HEK293 (cell line): ENCODE measurements at regions of chr6 and their contacts with region 1.

Region 1: DNA sequence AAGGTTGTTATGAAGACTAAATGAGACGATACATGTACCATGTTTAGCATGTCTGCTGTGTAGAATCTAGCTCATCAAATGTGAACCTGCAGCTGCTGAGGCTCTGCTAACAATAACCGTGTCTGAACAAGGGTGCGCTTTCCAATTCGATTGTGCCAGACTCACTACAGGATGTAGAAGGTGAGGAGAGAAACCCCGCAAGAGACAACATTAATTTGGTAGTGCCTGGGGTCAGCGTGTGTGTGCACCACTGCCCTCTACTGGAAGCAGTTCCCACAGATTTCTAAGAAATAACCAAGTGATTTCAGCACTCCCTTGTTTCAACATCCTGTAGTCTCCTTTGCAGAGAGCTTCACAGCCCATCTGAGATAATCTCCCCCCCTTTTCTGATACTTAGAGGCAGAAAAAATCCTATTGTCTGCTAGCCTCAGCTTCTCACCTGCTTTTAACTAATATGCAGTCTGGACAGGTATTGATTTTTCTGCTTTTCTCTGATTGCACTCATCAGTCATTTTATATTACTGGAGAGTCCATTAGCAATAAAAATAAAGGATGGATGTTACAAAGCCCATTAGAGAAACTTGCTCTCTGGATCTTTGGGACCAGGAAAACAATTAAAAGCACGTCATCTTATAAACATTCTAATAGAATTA is 96.7 kb upstream of the BACH2 start:
- H3K4me3 ChIP-seq: no peak overlapping the region
- H3K27ac ChIP-seq: no peak overlapping the region
- H3K4me1 ChIP-seq: no peaks in the 10 kb centered on the region
- CTCF ChIP-seq: peak; percentile 63; the same call in 1 of the 2 replicates

Region 2: DNA sequence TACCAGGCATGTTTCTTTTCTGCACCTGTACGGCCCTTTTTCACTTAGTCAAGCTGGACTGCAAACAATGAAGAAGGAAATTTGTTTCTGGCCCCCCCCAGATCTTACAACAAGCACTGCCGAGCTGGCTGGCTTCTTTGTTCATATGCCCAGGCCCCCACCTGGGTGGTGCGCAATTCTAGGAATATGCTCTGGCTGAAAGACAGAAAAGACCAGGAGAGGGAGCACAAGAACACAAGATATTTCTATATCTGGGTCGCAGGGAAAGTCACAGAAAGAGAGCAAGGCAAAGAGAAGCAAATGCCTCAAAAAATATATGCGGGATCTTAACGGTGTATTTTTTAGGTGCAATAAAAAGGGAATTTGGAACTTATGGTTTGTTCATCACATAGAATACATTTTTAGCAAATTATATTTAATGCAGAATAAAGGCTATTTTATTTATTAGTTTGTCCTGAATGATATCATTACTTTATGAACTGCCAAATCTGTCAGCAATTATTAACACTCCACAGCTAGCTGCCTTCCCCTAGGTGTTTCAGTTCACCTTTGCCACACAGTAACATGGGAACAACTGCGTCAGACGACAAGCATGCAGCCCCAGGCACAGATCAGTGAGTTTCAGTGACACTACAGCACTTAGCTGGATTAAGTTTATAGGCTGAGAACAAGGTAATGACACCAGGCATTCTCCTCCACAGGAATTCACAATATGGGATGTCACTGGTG is 422.6 kb before region 1 on chr6:
- CTCF ChIA-PET with region 1: interaction called, 13 read pairs
- POLR2A ChIA-PET with region 1: no interaction called
- H3K4me3 ChIP-seq: no peak overlapping the region
- H3K27ac ChIP-seq: no peak overlapping the region
- H3K4me1 ChIP-seq: no peaks in the 10 kb centered on the region; the same call in 1 of the 2 replicates
- CTCF ChIP-seq: peak; percentile 47; the same call in 1 of the 2 replicates

Region 3: DNA sequence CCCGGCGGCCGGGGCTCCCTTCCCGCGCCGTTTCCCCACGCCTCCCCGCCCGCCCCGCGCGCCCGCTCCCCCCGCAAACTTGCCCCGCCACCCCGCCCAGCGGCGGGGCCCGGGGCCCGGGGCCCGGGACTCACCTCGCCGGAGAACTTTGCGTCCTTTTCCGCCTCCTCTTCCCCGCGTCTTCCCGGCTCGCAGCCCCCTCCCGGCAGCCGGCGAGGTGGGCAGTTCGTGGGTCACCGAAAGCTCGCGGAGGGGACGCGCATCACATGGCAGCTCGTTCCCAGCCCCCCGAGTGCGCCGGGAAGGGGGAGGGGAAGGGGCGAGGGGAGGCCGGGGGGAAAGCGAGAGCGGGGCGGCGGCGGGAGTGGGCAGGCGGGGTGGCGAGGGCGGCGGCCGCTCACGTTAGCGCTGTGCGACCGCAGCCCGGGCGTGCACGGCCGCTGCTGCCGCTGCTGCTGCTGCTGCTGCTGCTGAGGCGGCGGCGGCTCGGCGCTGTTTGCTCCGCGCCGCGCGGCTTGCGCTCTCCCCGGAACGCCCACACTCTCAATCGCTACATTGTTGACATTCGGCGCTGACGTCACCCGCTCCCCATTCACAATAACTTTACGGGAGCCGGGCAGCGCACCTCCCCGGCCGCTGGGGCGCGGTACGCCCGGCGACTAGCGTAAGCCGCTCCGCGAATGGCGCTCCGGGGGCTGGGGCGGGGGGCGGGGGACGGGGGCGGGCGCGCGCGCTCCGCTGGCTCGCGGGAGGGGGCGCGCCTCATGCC is 96.8 kb before region 1 on chr6 and contains the start of gene BACH2:
- CTCF ChIA-PET with region 1: interaction called, 18 read pairs
- POLR2A ChIA-PET with region 1: interaction called, 4 read pairs
- H3K4me3 ChIP-seq: peak within 1 kb of the TSS; percentile 82
- H3K27ac ChIP-seq: peak within 1 kb of the TSS; percentile 70; the same call in 1 of the 2 replicates
- H3K4me1 ChIP-seq: no peaks in the 10 kb centered on the region; the same call in 1 of the 2 replicates
- CTCF ChIP-seq: no peak

Region 4: GRCh38 chr6:90343581-90343980 is 49.8 kb before region 1 on chr6:
- CTCF ChIA-PET with region 1: interaction called, 14 read pairs
- POLR2A ChIA-PET with region 1: no interaction called
- H3K4me3 ChIP-seq: no peak overlapping the region
- H3K27ac ChIP-seq: no peak overlapping the region
- H3K4me1 ChIP-seq: no peaks in the 10 kb centered on the region
- CTCF ChIP-seq: no peak

Region 5: DNA sequence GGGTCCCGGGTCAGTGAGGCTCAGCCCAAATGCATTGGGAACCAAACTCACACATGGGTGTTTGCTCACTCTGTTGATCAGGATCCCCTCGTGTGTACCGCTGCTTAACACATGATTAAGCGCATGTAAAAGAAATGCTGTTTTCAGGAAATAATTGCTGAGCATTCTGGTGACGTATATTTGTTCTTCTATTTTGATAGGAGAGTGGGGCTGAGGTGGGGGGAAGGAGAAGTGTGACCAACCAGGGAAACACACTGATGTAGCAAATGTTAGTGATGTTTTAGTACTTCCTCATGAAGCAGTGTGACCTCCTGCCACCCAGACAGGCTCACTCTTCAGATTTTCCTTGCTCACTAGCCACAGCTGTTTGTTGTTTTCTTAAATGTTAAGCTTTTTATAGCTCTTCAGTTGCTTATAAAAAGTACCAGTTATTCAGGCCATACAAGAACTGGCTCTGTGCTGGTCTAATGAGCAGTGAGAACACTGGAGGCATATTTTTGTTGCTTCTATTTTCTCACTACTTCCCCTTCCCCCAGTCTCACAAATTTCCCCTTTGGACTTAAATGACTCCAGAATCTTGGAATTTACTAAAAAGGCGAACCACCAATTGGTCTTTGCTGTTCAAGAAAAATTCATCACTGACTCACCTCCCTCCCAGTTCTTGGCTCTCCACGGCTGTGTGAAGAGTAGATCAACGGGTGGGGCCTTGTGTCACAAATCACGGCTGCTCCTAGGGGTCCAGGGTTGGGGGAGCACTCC is 17.5 kb before region 1 on chr6:
- CTCF ChIA-PET with region 1: interaction called, 46 read pairs
- POLR2A ChIA-PET with region 1: no interaction called
- H3K4me3 ChIP-seq: no peak overlapping the region
- H3K27ac ChIP-seq: no peak overlapping the region
- H3K4me1 ChIP-seq: no peaks in the 10 kb centered on the region
- CTCF ChIP-seq: no peak

Region 6: DNA sequence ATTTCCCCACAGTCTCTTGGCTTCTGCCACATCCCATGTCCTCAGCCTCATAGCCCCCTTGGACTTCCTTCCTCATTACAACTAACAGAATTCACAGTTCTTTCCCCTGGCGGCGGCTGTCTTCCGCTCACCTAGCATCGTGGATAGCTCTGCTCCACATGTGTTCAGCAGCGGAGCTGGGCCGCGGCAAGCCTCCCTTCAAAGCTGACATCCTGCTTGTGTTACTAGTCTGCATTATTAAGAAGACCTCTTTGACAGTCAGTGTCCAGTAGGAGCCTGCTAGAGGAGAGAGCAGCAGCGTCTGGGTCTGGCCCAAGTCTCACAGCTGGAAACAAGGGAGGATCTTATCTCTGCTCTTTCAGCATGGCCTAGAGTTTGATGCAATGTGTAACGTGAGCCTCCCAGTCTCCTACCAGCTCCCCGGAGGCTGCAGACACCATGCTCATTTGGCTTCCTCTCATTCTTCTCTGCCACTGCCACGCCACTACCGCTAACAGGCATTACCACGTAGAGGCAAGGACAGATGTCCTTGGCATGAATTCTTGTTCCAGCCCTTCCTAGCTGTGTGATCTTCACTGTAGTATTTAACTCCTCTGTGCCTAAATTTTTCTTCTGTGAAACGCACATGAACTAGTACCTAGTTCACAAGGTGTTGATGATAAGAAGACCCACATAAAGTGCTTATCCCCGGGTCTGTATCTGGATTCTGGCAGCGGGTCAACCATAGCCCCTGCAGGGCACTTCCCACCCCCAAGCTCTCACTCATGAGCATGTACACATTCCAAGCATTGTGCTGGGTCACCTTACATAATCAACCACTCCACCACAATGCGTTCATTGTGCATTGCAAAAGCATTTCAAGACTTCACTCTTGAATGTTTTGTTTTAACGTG is 10.4 kb after region 1 on chr6:
- CTCF ChIA-PET with region 1: interaction called, 27 read pairs
- POLR2A ChIA-PET with region 1: no interaction called
- H3K4me3 ChIP-seq: no peak overlapping the region
- H3K27ac ChIP-seq: no peak overlapping the region
- H3K4me1 ChIP-seq: 0 out of 2 replicates have a peak, but pooled peaks cover 4% of the 10 kb centered on the region
- CTCF ChIP-seq: no peak

Region 7: DNA sequence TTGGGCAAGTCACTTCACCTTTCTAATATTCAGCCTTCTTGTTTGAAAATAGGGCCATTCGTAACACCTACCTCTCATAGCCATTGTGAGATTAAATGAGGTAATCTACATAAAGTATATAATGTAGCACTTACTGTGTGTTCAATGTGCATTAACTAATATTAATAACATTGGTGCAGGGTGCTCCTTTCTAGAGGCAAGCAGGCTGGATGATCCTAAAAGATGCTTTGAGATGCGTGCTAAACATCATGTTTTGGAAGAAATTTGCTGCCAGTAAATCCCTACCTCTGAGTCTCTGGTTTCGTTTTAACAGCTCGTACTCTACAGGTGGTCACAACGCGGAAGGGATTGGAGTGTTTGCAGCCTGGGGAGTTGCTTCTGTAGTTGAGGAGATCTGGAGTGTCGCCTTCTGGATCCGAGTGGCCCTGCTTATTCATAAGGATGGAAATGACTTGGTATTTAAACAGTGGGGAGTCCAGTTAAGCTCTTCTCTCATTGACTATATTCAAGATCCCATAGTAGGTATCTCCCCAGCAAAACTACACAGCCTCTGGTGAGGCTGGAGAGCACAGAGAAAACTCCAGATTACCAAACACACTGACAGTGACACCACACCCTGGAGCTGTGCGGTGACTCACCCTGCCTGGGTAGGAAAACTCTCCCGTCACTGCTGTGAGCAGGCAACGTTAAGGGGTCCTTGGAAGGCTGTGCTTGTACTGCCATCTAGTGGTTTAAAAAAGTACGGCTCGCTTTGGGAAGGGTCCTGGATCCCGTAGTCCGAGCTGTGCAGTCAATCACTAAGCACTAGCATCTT is 85.6 kb after region 1 on chr6:
- CTCF ChIA-PET with region 1: interaction called, 48 read pairs
- POLR2A ChIA-PET with region 1: no interaction called
- H3K4me3 ChIP-seq: no peak overlapping the region
- H3K27ac ChIP-seq: no peak overlapping the region
- H3K4me1 ChIP-seq: no peaks in the 10 kb centered on the region
- CTCF ChIP-seq: peak; percentile 88

Region 8: DNA sequence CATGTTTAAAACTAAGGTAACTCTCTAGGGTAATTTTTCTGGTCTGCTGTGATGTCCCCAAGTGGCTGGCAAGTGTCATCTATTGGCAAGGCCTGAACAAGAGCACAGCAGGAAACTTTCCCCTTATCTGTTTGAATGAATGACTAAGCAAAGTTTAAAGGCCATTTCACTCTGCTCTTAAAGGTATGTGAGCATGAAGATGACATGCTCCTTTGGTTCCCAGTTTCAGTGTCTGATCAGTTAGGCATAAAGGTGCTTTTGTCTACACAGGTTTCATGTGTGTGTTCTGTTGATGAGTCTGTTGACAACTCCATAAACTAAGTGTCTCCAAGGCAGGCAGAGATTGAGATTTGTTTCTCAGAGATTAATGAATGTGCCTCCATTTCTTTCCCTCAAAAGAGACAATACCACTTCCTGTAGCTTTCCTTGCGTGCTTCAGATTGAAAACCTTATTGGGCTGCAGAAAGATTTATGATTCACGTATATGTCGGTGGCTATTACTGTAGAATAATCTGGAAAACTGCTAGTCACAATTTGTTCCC is 109.6 kb after region 1 on chr6:
- CTCF ChIA-PET with region 1: no interaction called
- POLR2A ChIA-PET with region 1: no interaction called
- H3K4me3 ChIP-seq: no peak overlapping the region
- H3K27ac ChIP-seq: no peak overlapping the region
- H3K4me1 ChIP-seq: 0 out of 2 replicates have a peak, but pooled peaks cover 4% of the 10 kb centered on the region
- CTCF ChIP-seq: no peak